H1 (cell line): ENCODE measurements at regions of chr11 and their contacts with region 1.

Region 1: DNA sequence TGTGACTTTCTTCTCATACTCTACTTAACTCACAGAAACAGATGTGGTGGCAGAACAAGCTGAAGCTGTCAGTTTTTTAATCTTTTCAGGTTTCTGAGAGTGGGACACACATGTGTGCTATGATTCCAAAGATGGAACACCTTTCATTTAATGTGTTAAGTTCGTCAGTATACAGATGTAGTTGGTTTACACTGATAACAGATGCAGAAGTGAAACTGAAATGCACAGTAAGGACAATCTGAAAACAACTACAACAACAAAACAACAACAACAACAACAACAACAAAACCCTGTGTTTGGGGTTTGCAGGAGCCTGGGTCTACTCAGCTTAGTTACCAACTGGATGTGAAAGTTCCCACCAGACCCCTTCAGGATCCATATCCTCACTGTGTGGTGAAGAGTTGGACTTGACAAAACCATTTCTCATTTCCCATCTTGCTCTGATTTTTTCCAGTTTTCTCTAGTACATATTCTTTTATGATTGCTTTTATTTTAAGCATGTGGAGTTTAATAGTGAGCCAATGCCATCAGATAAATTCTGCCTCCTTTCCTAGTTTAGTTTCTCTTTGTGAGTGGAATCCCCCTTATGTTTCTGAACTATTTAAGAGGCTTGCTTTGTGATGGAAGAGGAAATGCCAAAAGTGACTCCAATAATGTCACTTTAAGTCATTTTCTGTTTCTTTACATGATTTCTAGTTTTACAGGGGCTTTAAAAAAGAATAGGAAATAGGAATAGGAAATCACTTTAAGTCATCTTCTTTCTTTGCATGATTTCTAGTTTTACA is 47.8 kb downstream of the ARHGAP42 start:
- DNase-seq: no peak
- H3K4me3 ChIP-seq: no peak overlapping the region
- H3K27ac ChIP-seq: no peak overlapping the region
- H3K4me1 ChIP-seq: peaks cover 0 to 14% (median 6%) of the 10 kb centered on the region in 4 experiments; a peak in 6 of 7 replicates
- H3K27me3 ChIP-seq: no peaks in the 10 kb centered on the region
- CTCF ChIP-seq: no peak
- EP300 ChIP-seq: no peak
- POLR2A ChIP-seq: no peak
- RAD21 ChIP-seq: no peak

Region 2: DNA sequence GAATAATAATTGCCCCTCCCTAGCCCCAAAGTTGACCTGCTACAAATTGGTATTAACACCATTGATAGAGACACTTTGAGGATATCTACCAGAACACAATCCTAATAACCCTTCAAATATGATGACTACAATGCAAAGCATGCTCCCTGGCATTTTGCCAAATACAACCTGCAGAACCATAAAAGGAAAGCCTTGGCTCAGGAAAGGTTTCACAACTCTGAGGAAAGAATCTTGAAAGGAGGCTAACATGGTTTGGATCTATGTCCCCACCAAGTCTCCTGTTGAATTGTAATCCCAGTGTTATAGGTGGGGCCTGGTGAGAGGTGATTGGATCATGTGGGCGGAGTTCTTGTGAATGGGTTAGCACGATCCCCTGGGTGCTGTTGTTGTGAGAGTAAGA is 188.2 kb before region 1 on chr11:
- CTCF ChIA-PET with region 1: no interaction called
- POLR2A ChIA-PET with region 1: no interaction called
- DNase-seq: no peak
- H3K4me3 ChIP-seq: no peak overlapping the region
- H3K27ac ChIP-seq: no peak overlapping the region
- H3K4me1 ChIP-seq: peaks cover 0 to 8% (median 2%) of the 10 kb centered on the region in 4 experiments; a peak in 4 of 7 replicates
- H3K27me3 ChIP-seq: no peaks in the 10 kb centered on the region
- CTCF ChIP-seq: no peak
- EP300 ChIP-seq: no peak
- POLR2A ChIP-seq: no peak
- RAD21 ChIP-seq: no peak

Region 3: GRCh38 chr11:100753172-100753543 is 18.2 kb after region 1 on chr11:
- CTCF ChIA-PET with region 1: interaction called, 13 read pairs
- POLR2A ChIA-PET with region 1: interaction called, 3 read pairs
- DNase-seq: peak; percentile 43 to 61
- H3K4me3 ChIP-seq: no peak overlapping the region
- H3K27ac ChIP-seq: 0 out of 2 replicates have a peak overlapping the region, but pooled peaks have one; percentile 14
- H3K4me1 ChIP-seq: peaks cover 8 to 21% (median 18%) of the 10 kb centered on the region in 4 experiments; a peak in 6 of 7 replicates
- H3K27me3 ChIP-seq: no peaks in the 10 kb centered on the region
- CTCF ChIP-seq: peak in 1 of 3 experiments; percentile 7; a peak in 1 of 4 replicates
- EP300 ChIP-seq: no peak
- POLR2A ChIP-seq: no peak
- RAD21 ChIP-seq: peak; percentile 4 to 18; a peak in 1 of 4 replicates